Activated CD4-positive, alpha-beta T cell treated with anti-CD3 and anti-CD28 coated beads for 36 hours (primary cell): ENCODE measurements at regions of chr14 and their contacts with region 1.

Region 1: GRCh38 chr14:73949744-73950734 is at the starts of genes COQ6 and FAM161B:
- DNase-seq: peak; percentile 95
- ATAC-seq: peak; percentile 96
- H3K4me3 Mint-ChIP-seq: peak within 1 kb of the TSS; percentile 91
- H3K27ac Mint-ChIP-seq: peak within 1 kb of the TSS; percentile 88
- H3K4me1 Mint-ChIP-seq: peaks cover 14% of the 10 kb centered on the region
- H3K27me3 Mint-ChIP-seq: no peaks in the 10 kb centered on the region
- total RNA-seq, gene COQ6: 14.1 to 17.0 TPM
- total RNA-seq, gene FAM161B: 1.2 to 1.4 TPM

Region 2: DNA sequence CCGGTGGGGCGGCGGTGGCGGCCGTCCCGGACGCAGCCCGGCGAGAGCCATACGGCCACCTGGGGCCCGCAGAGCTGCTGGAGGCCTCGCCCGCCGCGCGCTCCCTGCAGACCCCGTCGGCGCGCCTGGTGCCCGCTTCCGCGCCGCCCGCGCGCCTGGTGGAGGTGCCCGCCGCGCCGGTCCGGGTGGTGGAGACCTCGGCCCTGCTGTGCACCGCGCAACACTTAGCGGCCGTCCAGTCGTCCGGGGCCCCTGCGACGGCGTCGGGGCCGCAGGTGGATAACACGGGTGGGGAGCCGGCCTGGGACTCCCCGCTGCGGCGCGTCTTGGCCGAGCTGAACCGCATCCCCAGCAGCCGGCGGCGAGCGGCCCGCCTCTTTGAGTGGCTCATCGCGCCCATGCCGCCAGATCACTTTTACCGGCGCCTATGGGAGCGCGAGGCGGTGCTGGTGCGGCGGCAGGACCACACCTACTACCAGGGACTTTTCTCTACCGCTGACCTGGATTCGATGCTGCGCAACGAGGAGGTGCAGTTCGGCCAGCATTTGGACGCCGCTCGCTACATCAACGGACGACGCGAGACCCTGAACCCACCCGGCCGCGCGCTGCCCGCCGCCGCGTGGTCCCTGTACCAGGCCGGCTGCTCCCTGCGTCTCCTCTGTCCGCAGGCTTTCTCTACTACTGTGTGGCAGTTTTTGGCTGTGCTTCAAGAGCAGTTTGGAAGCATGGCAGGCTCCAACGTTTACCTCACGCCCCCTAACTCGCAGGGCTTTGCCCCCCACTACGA is 458.6 kb before region 1 on chr14:
- CTCF ChIA-PET with region 1: no interaction called
- POLR2A ChIA-PET with region 1: no interaction called
- intact Hi-C with region 1: loop called in 1 of 2 experiments (anchors 1 kb)
- DNase-seq: peak; percentile 84
- ATAC-seq: peak; percentile 79
- H3K4me3 Mint-ChIP-seq: peak overlapping the region; percentile 81
- H3K27ac Mint-ChIP-seq: peak overlapping the region; percentile 75
- H3K4me1 Mint-ChIP-seq: peaks cover 40% of the 10 kb centered on the region
- H3K27me3 Mint-ChIP-seq: peaks cover 2% of the 10 kb centered on the region

Region 3: DNA sequence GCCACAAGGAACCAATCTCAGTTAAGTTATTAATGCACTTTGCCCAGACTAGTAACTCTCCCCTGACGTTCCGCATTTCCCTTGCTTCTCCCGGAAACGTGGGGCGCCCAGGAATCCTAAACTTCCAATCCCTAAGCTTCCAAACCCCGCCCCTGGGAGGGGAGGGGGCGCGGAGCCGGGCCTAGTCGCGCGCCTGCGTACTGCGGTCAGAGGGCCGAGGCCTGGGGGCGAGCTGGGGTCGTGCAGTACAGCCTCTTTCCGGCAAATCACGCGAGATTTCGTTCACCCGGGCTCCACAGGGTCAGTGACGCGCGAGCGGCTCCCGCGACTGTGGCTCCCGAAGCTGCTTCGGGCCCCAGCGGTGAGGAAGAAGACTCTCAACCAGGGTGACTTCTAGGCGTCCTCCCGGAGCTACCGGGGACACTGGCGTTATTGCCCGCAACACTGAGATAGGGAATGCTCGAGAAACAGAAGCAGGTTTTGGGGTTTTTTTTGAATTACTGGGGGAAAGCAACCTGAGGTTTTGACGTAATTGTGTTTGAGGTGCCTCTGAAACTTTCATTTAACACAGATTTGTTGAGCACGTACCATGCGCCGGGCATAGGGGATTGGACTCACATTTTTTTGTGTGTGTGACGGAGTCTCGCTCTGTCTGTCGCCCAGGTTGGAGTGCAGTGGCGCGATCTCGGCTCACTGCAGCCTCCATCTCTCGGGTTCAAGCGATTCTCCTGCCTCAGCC is 98.2 kb before region 1 on chr14 and contains the start of gene PTGR2:
- CTCF ChIA-PET with region 1: interaction called, 4 read pairs
- POLR2A ChIA-PET with region 1: interaction called, 3 read pairs
- intact Hi-C with region 1: loop called in 1 of 2 experiments (anchors 1 kb)
- DNase-seq: peak; percentile 94
- ATAC-seq: peak; percentile 94
- H3K4me3 Mint-ChIP-seq: peak within 1 kb of the TSS; percentile 98
- H3K27ac Mint-ChIP-seq: peak within 1 kb of the TSS; percentile 100
- H3K4me1 Mint-ChIP-seq: peaks cover 24% of the 10 kb centered on the region
- H3K27me3 Mint-ChIP-seq: no peaks in the 10 kb centered on the region
- total RNA-seq, gene PTGR2: 12.6 to 14.3 TPM

Region 4: GRCh38 chr14:73924337-73924736 is 25.7 kb before region 1 on chr14:
- CTCF ChIA-PET with region 1: no interaction called
- POLR2A ChIA-PET with region 1: no interaction called
- intact Hi-C with region 1: no loop called
- DNase-seq: no peak
- ATAC-seq: no peak
- H3K4me3 Mint-ChIP-seq: no peak overlapping the region
- H3K27ac Mint-ChIP-seq: no peak overlapping the region
- H3K4me1 Mint-ChIP-seq: no peaks in the 10 kb centered on the region
- H3K27me3 Mint-ChIP-seq: no peaks in the 10 kb centered on the region

Region 5: GRCh38 chr14:74038015-74038859 is 88.2 kb after region 1 on chr14:
- CTCF ChIA-PET with region 1: no interaction called
- POLR2A ChIA-PET with region 1: no interaction called
- intact Hi-C with region 1: loop called in 1 of 2 experiments (anchors 1 kb)
- DNase-seq: no peak
- ATAC-seq: peak; percentile 51
- H3K4me3 Mint-ChIP-seq: no peak overlapping the region
- H3K27ac Mint-ChIP-seq: no peak overlapping the region
- H3K4me1 Mint-ChIP-seq: no peaks in the 10 kb centered on the region
- H3K27me3 Mint-ChIP-seq: no peaks in the 10 kb centered on the region

Region 6: GRCh38 chr14:74922739-74923401 is 972.8 kb after region 1 on chr14 and contains the start of gene RPS6KL1:
- CTCF ChIA-PET with region 1: no interaction called
- POLR2A ChIA-PET with region 1: no interaction called
- intact Hi-C with region 1: no loop called
- DNase-seq: peak; percentile 86
- ATAC-seq: peak; percentile 99
- H3K4me3 Mint-ChIP-seq: peak within 1 kb of the TSS; percentile 66
- H3K27ac Mint-ChIP-seq: peak within 1 kb of the TSS; percentile 39
- H3K4me1 Mint-ChIP-seq: peaks cover 10% of the 10 kb centered on the region
- H3K27me3 Mint-ChIP-seq: peaks cover 6% of the 10 kb centered on the region
- total RNA-seq, gene RPS6KL1: 5.6 to 6.0 TPM